Left ventricle myocardium superior (tissue), 1 donor: ENCODE measurements at regions of chr5 and their contacts with region 1.

Region 1: GRCh38 chr5:141695627-141696215 is 13.7 kb upstream of the ARAP3 start:
- DNase-seq: peak; percentile 78
- ATAC-seq: peak; percentile 88

Region 2: DNA sequence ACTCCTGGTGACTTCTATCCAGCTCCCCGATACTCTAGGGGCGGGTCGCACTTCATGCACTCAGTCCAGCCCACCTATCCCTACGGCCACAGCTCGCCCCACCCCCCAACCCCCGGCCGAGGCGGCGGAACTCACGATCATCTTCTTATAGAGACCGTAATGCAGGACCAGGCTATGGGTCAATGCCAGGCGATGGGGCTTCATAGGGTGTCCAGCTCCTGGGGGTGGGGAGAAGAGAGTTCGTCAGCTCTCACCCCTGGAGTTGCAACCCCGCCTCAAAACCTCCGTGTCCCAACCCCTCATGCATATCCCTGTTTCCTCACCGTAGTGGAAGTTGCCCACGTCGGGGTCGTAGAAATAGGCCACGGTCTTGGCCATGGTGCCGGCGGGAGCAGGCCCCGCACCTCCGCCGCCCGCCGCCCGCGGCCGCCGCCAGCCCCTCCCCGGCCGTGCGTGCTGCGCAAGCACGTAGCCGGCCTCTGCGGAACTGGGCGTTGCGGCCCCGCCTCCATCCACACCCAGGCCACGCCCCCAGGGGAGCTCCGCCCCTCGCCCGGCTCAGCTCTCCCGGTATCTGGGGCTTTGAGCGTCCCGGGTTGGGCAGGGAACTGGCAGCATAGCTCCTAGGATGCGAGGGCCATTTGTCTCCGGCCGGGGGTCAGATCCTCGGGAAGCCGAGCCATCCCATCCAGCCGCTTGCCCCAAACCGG is 59.2 kb before region 1 on chr5 and contains the starts of genes HDAC3 and RELL2:
- intact Hi-C with region 1: no loop called
- DNase-seq: peak; percentile 97
- ATAC-seq: peak; percentile 98
- total RNA-seq, gene HDAC3: 28.9 TPM
- total RNA-seq, gene RELL2: 0.55 TPM

Region 3: DNA sequence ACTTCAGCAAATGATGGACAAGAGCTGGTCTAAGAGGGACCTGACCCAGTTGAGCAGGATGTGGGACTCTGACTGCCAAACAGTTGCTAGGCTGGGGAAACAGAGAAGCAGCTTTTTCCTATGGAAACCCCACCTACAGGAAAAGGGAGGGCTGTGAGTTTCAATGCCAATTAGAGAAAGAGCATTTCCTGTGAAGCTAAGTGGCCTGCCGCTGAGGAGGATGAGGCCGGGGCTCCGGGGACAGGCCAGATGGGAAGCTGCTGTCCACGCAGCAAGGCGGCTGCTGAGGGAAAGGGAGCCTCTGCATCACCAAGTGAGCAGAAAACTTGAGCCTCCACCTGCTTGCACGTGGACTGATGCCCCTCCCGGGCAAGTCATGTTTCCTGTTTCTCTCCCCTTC is 262.4 kb after region 1 on chr5 and contains the start of gene PCDH12:
- intact Hi-C with region 1: loop called (anchors 5 kb)
- DNase-seq: peak; percentile 73
- ATAC-seq: peak; percentile 67
- total RNA-seq, gene PCDH12: 11.1 TPM